AG04450 (cell line): ENCODE measurements at regions of chr1 and their contacts with region 1.

Region 1: GRCh38 chr1:235783148-235783776 is 83.4 kb downstream of the LYST start:
- DNase-seq: peak; percentile 15
- H3K4me3 ChIP-seq: no peak overlapping the region
- H3K27ac ChIP-seq: no peak overlapping the region
- H3K27me3 ChIP-seq: no peaks in the 10 kb centered on the region
- CTCF ChIP-seq: peak; percentile 60

Region 2: DNA sequence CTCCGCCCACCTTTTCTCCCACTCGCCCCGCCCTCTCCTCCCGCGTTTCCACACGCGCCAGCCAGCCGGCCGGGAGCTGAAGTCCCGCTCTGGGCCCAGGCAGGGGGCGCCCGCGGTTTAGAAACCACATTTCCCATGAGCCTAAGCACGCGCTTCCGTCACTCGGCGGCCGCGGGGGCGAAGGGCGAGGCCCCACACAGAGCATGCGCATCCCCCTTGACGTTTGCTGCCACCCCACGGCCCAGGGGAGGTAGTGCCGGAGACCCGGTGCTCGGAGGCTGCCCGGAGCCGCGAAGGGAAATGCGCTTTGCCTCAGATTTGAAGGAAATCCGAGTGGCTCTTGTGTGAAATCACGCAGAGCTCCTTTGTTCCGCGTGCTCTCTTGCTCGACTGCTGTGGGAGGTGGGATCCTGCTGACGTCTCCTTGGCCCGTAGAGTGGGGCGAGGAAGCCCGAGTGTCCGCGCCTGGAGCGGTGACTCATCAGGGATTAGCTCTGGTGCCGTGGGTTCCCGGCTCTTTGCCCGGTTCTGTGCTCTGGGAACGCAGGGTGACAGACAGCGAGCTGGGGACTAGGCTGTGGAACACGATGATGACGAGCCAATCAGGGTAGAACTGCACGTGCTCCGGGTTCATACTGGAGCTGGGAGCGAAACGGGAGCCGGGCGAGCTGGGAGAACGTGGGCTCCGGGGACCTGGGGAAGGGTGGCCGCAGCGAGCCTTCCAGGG is 278.6 kb before region 1 on chr1:
- CTCF ChIA-PET with region 1: interaction called, 27 read pairs
- POLR2A ChIA-PET with region 1: interaction called, 4 read pairs
- DNase-seq: peak; percentile 98
- H3K4me3 ChIP-seq: peak overlapping the region; percentile 87
- H3K27ac ChIP-seq: peak overlapping the region; percentile 99
- H3K27me3 ChIP-seq: no peaks in the 10 kb centered on the region
- CTCF ChIP-seq: peak; percentile 77

Region 3: DNA sequence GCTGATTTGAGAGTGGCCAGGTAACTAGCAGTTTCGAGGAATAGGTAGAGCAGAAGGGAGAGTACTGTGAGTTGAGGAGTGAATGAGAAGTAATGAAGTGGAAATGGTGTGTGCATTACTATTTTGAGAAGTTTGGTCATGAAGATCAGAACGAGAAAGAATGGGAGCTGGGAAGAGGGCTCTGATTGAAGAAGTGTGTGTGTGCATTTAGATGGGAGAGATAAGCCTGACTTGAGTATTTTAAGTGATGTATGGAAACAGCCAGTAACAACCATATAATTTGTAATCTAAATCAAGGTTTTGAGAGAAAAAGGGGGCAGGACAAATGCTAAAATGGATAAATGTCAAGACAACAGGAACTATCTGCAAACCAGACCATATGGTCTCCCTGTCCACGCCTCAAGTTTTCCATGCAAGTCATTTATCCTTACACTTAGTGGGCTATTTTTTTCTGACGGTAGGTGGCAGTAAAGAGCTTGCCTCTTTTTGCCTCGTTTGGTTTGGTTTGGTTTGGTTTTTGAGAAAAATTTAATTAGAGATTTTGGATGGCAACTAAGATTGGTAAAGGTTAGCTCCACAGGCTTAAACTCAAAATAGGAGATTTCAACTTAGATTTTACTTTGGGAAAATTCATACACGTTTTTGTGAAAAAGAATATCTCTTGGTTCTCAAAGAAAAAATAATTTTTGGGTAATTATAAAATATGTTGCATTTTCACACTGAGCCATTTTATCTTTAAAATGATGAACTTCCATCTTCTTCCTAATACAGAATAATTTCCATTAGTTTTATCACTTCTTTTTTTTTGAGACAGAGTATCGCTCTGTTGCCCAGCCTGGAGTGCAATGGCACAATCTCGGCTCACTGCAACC is 269.5 kb before region 1 on chr1:
- CTCF ChIA-PET with region 1: interaction called, 74 read pairs
- POLR2A ChIA-PET with region 1: no interaction called
- DNase-seq: peak; percentile 49
- H3K4me3 ChIP-seq: no peak overlapping the region
- H3K27ac ChIP-seq: no peak overlapping the region
- H3K27me3 ChIP-seq: no peaks in the 10 kb centered on the region
- CTCF ChIP-seq: peak; percentile 93

Region 4: DNA sequence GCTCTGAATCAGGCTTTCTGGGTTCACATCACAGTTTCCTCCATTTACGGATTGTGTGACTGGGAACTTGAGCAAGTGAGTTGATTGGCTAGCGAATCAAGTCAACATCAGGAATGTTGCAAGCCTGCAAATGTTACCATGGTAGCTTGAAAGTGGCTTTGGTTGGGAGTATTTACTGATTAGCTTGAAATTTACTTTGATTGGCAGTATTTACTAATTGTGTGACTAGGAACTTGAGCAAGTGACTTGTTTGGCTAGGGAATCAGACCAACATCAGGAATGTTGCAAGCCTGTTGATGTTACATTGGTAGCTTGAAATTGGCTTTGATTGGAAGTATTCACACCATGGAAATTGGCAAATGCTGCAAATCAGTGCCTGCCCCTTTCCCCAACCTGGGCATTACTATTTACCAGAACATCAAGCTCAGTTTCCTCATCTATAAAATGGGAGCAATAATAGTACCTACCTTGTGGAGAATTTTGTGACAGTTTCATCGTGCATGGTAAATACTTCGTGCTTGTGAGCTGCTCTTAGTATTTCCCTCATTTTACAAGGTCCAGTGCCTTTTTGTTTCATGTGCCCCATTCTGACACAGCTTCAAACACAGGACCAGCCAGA is 256.0 kb before region 1 on chr1:
- CTCF ChIA-PET with region 1: interaction called, 13 read pairs
- POLR2A ChIA-PET with region 1: no interaction called
- DNase-seq: no peak
- H3K4me3 ChIP-seq: no peak overlapping the region
- H3K27ac ChIP-seq: no peak overlapping the region
- H3K27me3 ChIP-seq: no peaks in the 10 kb centered on the region
- CTCF ChIP-seq: no peak

Region 5: DNA sequence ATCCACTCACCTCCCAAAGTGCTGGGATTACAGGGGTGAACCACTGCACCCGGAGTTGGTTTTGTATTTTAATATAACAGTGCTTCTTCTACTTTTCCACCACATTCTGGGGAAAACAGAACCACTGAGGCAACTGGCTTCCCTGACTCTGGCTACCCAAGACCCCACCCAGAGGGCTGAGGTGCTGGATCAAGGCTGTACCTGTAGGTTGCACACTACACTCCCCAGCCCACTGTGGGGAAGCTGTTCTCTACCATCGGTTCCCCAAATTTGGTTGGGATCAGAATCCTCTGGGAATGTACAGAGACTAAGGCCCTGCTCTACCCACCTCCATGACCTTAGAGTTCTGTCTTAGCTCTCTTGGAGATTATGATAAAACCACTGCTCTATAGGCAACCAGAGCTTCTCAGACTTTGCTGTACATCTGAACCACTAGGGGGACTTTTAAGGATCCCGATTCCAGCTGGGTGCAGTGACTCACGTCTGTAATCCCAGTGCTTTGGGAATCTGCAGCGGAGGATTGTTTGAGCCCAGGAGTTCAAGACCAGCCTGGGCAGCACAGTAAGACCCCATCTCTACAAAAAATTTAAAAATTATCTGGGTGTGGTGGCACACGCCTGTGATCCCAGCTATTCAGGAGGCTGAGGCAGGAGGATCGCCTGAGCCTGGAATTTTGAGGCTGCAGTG is 185.3 kb before region 1 on chr1:
- CTCF ChIA-PET with region 1: interaction called, 16 read pairs
- POLR2A ChIA-PET with region 1: no interaction called
- DNase-seq: peak; percentile 10
- H3K4me3 ChIP-seq: no peak overlapping the region
- H3K27ac ChIP-seq: no peak overlapping the region
- H3K27me3 ChIP-seq: no peaks in the 10 kb centered on the region
- CTCF ChIP-seq: peak; percentile 54

Region 6: GRCh38 chr1:235866913-235867845 is 83.9 kb after region 1 on chr1:
- CTCF ChIA-PET with region 1: interaction called, 10 read pairs
- POLR2A ChIA-PET with region 1: no interaction called
- DNase-seq: peak; percentile 84
- H3K4me3 ChIP-seq: peak overlapping the region; percentile 90
- H3K27ac ChIP-seq: peak overlapping the region; percentile 73
- H3K27me3 ChIP-seq: no peaks in the 10 kb centered on the region
- CTCF ChIP-seq: no peak